ENCODE measurements at regions of chr7 and their contacts with region 1.

Region 1: DNA sequence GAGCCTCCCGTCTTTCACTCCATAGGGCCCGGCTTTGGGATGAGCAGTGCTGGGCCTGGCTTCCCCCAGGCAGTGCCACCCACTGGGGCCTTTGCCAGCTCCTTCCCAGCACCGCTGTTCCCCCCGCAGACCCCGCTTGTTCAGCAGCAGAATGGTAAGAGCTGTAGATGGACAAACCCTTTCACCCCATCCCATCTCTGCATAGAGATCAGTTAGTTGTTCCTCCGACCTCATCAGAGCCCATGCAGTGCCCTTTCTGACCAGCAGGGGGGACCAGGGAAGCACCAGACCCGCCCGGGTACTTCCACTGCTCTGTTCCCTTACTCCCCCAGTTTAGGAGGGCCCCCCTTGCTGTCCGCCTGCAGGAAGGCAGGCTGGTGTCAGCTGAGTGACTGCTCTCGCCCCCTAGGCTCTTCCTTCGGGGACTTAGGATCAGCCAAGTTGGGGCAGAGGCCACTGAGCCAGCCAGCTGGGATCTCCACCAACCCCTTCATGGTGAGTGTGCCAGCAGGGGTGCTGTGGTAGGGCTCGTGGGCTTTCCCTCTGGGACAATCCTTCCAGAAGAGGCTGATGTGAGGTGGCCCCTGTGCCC is 9.8 kb downstream of the SAP25 start:
- DNase-seq: peak; percentile 79 to 93 (median 86)
- H3K4me3 ChIP-seq: no peak overlapping the region
- H3K27ac ChIP-seq: peak overlapping the region in 2 of 5 donors; percentile 41 to 60
- H3K4me1 ChIP-seq: peaks cover 24 to 37% of the 10 kb centered on the region in 2 donors
- H3K27me3 ChIP-seq: no peaks in the 10 kb centered on the region
- CTCF ChIP-seq: peak; percentile 90 to 94 (median 92)
- POLR2A ChIP-seq: no peak

Region 2: GRCh38 chr7:100469227-100470044 is 94.5 kb before region 1 on chr7:
- intact Hi-C with region 1: loop called in 1 of 2 experiments (anchors 5 kb)
- DNase-seq: peak; percentile 84 to 95 (median 92)
- H3K4me3 ChIP-seq: no peak overlapping the region
- H3K27ac ChIP-seq: peak overlapping the region in 2 of 5 donors; percentile 33 to 41
- H3K4me1 ChIP-seq: peaks cover 17 to 36% of the 10 kb centered on the region in 2 donors
- H3K27me3 ChIP-seq: no peaks in the 10 kb centered on the region
- CTCF ChIP-seq: peak; percentile 92 to 99 (median 96)
- POLR2A ChIP-seq: no peak

Region 3: DNA sequence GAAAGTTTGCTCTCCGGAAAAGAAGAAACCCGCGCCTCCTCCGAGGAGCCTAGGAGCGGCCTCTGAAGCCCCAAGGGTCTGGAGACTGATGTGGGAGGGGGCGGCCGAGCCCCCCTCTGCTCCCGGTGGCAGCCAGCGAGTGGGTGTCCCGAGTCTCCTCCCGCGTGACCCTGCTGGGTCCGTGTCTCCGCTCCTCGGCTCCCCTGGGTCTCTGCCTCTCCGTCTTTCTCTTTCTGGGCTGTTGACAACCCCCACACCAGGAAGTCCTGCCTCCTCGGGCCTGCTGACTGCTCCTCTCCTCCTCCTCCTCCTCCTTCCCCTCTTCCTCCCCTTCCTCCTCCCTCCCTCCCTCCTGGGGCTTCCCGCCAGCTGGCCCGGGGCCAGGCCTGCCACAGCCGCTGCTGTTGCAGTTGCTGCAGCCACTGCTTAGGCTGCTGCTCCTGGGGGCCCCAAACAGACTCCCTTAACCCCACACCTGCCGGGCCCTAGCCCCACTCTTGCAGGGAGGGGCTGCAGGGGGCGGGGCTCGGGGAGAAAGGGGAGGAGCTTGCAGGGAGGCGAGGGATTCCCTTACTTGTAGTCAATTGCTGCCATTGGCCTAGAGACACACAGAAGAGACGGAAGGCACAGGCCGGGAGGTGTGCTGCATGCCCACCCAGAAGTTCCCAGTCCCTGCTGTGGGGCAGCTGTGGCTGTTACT is 84.8 kb before region 1 on chr7 and contains the start of gene TSC22D4:
- intact Hi-C with region 1: loop called in 1 of 2 experiments (anchors 5 kb)
- DNase-seq: peak; percentile 95 to 98 (median 97)
- H3K4me3 ChIP-seq: peak within 1 kb of the TSS; percentile 56 to 100 (median 96)
- H3K27ac ChIP-seq: peak within 1 kb of the TSS; percentile 57 to 88 (median 77)
- H3K4me1 ChIP-seq: peaks cover 31 to 47% of the 10 kb centered on the region in 2 donors
- H3K27me3 ChIP-seq: no peaks in the 10 kb centered on the region
- CTCF ChIP-seq: no peak
- POLR2A ChIP-seq: peak; percentile 75 to 94
- total RNA-seq, gene TSC22D4: 22.1 to 96.1 (median 58.6) TPM

Region 4: GRCh38 chr7:100545360-100546128 is 18.4 kb before region 1 on chr7:
- intact Hi-C with region 1: loop called in 1 of 2 experiments (anchors 2 kb)
- DNase-seq: peak; percentile 78 to 94 (median 91)
- H3K4me3 ChIP-seq: peak overlapping the region in 1 of 4 donors; percentile 30
- H3K27ac ChIP-seq: peak overlapping the region; percentile 88 to 99 (median 93)
- H3K4me1 ChIP-seq: peaks cover 75 to 85% of the 10 kb centered on the region in 2 donors
- H3K27me3 ChIP-seq: no peaks in the 10 kb centered on the region
- CTCF ChIP-seq: peak in 3 of 6 experiments; percentile 7 to 29 (median 26)
- POLR2A ChIP-seq: peak in 1 of 2 donors; percentile 55

Measured in adrenal gland (tissue), 19 donors.